ENCODE measurements at regions of chr12 and their contacts with region 1.

Region 1: GRCh38 chr12:98424726-98425401 is 90.5 kb upstream of the TMPO start:
- DNase-seq: no peak
- ATAC-seq: peak; percentile 88

Region 2: GRCh38 chr12:98516184-98516873 is 91.5 kb after region 1 on chr12:
- intact Hi-C with region 1: loop called (anchors 5 kb)
- DNase-seq: peak; percentile 70
- ATAC-seq: peak; percentile 69

Region 3: GRCh38 chr12:98606357-98606988 is 181.6 kb after region 1 on chr12:
- intact Hi-C with region 1: no loop called
- DNase-seq: no peak
- ATAC-seq: no peak